Activated T-helper 1 cell treated with anti-CD3 and anti-CD28 coated beads, Interleukin-12 subunit alpha, Interleukin-12 subunit beta, Interleukin-2, Interleukin-4 antibody, amounts not matched to agents 30 ng/mL and 10 ng/mL and 1 ng/mL, durations not matched to agents 14 hours and 24 hours and 36 hours (primary cell): ENCODE measurements at regions of chr3 and their contacts with region 1.

Region 1: DNA sequence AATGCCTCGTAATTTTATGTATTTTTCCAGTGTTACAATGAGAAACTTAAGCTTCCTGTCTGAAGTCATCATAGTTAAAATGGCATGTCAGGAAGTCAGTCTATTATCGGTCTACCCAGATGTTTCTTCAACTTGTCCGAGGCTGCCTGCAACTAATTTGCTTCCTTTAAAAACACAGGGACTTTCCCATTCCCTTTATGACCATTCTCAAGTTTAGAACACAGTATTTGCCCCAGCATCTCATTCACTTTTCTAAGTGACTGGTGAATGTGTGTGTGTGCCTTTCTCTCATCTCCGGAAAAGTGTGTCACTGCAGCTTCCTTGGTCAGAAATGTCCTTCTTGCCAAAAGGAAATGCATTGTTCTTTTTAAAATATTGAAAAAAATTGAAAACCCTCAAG is 466.6 kb downstream of the RAP2B start:
- DNase-seq: no peak
- H3K4me3 Mint-ChIP-seq: peak overlapping the region; percentile 16
- H3K27ac Mint-ChIP-seq: peak overlapping the region; percentile 75
- H3K4me1 Mint-ChIP-seq: peaks cover 80% of the 10 kb centered on the region
- H3K27me3 Mint-ChIP-seq: no peaks in the 10 kb centered on the region

Region 2: GRCh38 chr3:153138276-153139210 is 490.0 kb before region 1 on chr3:
- intact Hi-C with region 1: loop called (anchors 1 kb)
- DNase-seq: peak; percentile 48
- H3K4me3 Mint-ChIP-seq: peak overlapping the region; percentile 48
- H3K27ac Mint-ChIP-seq: peak overlapping the region; percentile 87
- H3K4me1 Mint-ChIP-seq: peaks cover 33% of the 10 kb centered on the region
- H3K27me3 Mint-ChIP-seq: peaks cover 4% of the 10 kb centered on the region

Region 3: DNA sequence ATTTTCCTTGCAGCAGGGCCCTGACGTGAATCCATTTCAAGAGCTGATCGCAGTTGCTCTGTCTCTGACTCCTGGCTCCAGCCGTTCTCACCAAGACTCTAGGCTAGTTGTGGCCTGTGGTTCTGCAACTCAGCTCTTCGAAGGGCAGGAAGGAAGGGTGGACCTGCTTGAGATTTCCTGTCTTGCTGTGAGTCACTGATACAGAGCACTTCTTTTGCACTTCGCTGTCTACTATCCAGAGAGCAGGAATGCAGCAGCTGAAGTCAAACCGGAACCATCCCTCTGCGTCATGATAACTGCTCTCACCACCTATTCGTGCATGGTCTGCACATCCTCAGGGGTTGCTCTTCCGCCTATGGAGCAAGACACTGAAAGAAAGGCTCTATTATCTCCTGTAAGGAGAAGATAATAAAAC is 406.8 kb before region 1 on chr3:
- intact Hi-C with region 1: loop called (anchors 5 kb)
- DNase-seq: peak; percentile 75
- H3K4me3 Mint-ChIP-seq: peak overlapping the region; percentile 72
- H3K27ac Mint-ChIP-seq: peak overlapping the region; percentile 90
- H3K4me1 Mint-ChIP-seq: peaks cover 47% of the 10 kb centered on the region
- H3K27me3 Mint-ChIP-seq: no peaks in the 10 kb centered on the region

Region 4: DNA sequence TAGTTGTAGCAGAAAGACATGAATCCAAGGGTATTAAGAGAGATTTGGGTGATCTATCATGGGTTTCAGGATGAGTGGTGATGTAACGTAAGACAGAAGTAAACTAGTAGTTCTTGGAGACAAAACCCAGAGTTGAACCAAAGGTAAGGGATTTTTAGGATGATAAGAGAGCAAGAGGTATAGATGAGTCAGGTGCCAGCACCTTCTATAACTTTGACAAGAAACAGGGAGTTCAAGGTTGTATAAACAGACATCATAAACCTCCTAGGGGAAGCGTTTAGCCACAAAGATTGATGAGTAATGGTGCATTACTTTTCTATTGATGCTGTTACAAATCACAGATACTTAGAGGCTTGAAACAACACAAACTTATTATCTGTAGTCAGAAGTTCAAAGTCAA is 45.3 kb after region 1 on chr3:
- intact Hi-C with region 1: loop called (anchors 5 kb)
- DNase-seq: no peak
- H3K4me3 Mint-ChIP-seq: no peak overlapping the region
- H3K27ac Mint-ChIP-seq: no peak overlapping the region
- H3K4me1 Mint-ChIP-seq: peaks cover 12% of the 10 kb centered on the region
- H3K27me3 Mint-ChIP-seq: peaks cover 2% of the 10 kb centered on the region

Region 5: GRCh38 chr3:154235330-154235729 is 606.7 kb after region 1 on chr3:
- intact Hi-C with region 1: loop called (anchors 2 kb)
- DNase-seq: no peak
- H3K4me3 Mint-ChIP-seq: no peak overlapping the region
- H3K27ac Mint-ChIP-seq: no peak overlapping the region
- H3K4me1 Mint-ChIP-seq: no peaks in the 10 kb centered on the region
- H3K27me3 Mint-ChIP-seq: peaks cover 8% of the 10 kb centered on the region